ENCODE measurements at regions of chr6 and their contacts with region 1.

Region 1: GRCh38 chr6:55445648-55446204 is 118.5 kb downstream of the GFRAL start:
- DNase-seq: no peak
- ATAC-seq: no peak

Region 2: DNA sequence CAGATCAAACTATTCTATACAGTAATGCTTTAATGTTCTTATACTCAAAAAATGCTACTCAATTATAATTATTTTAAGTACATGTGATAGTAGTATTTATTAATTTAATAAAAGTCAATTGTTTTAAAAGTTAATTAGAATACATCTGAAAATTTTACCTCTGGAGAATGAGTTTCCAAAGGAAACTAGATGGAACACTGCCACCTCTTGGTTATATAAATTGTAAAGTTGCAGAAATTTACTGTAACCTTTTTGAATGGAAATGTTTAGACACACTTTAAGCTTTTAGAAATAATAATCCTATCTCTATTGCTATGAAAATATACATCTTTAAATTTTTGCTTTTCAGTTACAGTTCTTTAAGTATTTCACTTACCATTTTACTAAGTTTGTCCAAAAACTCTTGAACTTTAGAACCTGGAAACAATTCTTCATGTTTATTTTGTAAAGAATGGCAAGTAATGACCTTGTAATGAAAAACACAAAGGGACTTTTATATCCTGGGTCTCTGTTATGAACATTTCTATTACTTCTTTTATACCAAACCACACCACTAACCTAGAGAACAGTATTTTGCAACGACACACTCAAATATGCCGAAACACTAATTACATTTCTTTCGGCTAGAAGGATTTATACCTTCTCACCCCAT is 440.6 kb after region 1 on chr6:
- intact Hi-C with region 1: loop called in 1 of 2 experiments (anchors 5 kb)
- DNase-seq: no peak
- ATAC-seq: no peak

Region 3: GRCh38 chr6:55953335-55953734 is 507.6 kb after region 1 on chr6:
- intact Hi-C with region 1: loop called in 1 of 2 experiments (anchors 5 kb)
- DNase-seq: no peak
- ATAC-seq: no peak

Region 4: GRCh38 chr6:56292505-56293181 is 846.9 kb after region 1 on chr6:
- intact Hi-C with region 1: loop called in 1 of 2 experiments (anchors 5 kb)
- DNase-seq: peak in 1 of 2 donors; percentile 9
- ATAC-seq: peak; percentile 78